Caco-2 (cell line): ENCODE measurements at regions of chr18 and their contacts with region 1.

Region 1: GRCh38 chr18:61502472-61502871 is 169.2 kb downstream of the CDH20 start:
- DNase-seq: peak; percentile 27 to 35
- H3K4me3 ChIP-seq: no peak overlapping the region
- H3K4me3 Mint-ChIP-seq: no peak overlapping the region
- H3K27ac Mint-ChIP-seq: no peak overlapping the region
- H3K4me1 ChIP-seq: no peaks in the 10 kb centered on the region
- H3K4me1 Mint-ChIP-seq: no peaks in the 10 kb centered on the region
- H3K27me3 ChIP-seq: no peaks in the 10 kb centered on the region
- H3K27me3 Mint-ChIP-seq: peaks cover 4% of the 10 kb centered on the region
- CTCF ChIP-seq: peak; percentile 41 to 58

Region 2: GRCh38 chr18:60684843-60685513 is 817.5 kb before region 1 on chr18:
- CTCF ChIA-PET with region 1: no interaction called
- POLR2A ChIA-PET with region 1: no interaction called
- intact Hi-C with region 1: loop called (anchors 10 kb)
- DNase-seq: no peak
- H3K4me3 ChIP-seq: no peak overlapping the region
- H3K4me3 Mint-ChIP-seq: no peak overlapping the region
- H3K27ac Mint-ChIP-seq: no peak overlapping the region
- H3K4me1 ChIP-seq: no peaks in the 10 kb centered on the region
- H3K4me1 Mint-ChIP-seq: no peaks in the 10 kb centered on the region
- H3K27me3 ChIP-seq: no peaks in the 10 kb centered on the region
- H3K27me3 Mint-ChIP-seq: no peaks in the 10 kb centered on the region
- CTCF ChIP-seq: no peak

Region 3: DNA sequence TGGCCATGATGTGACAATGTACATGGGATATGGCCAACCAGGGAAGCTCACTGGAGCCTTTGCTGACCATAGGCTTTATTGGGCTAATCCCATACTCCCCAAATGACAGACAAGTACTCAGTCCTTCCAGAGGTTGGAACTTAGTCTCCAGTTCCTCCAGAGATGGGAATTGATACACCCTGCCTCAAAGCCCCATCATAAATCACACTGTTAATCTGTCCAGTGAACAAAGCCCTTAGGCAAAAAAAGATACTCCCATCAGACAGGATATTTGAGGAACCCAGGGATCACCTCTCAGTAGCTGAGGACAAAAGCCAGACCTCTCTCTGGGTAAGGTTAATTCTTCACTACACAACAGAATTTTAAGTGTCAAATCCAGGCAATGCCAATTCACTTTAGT is 416.7 kb before region 1 on chr18:
- CTCF ChIA-PET with region 1: no interaction called
- POLR2A ChIA-PET with region 1: no interaction called
- intact Hi-C with region 1: loop called (anchors 5 kb)
- DNase-seq: no peak
- H3K4me3 ChIP-seq: no peak overlapping the region
- H3K4me3 Mint-ChIP-seq: no peak overlapping the region
- H3K27ac Mint-ChIP-seq: no peak overlapping the region
- H3K4me1 ChIP-seq: no peaks in the 10 kb centered on the region
- H3K4me1 Mint-ChIP-seq: no peaks in the 10 kb centered on the region
- H3K27me3 ChIP-seq: no peaks in the 10 kb centered on the region
- H3K27me3 Mint-ChIP-seq: no peaks in the 10 kb centered on the region
- CTCF ChIP-seq: no peak

Region 4: DNA sequence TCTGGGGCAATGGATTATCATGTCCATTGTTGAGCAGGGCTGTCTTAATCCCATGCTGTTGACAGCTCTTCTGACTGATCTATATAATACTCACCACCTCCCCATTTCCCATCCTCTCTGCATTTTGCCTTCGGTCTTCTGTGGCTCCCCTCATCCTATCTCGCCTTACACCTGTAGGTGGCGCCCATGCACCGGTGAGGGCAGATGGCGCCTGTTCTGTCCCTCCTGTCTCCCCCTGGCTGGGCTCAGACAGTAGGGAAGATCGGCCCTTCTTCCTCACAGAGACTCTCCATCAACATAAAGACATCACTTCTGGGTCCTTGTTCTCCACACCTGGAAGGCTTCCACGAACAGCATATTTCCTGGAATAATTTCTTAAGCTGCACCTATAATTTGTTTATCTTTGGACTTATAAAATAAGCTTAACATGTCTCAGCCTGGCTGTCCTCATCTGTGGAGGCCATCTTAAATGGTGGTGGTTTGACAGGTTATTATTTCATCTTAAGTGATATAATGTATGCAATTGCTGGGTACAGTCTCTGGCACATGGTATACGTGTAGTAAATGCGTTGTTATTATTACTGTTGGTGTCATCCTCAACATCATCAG is 180.1 kb before region 1 on chr18:
- CTCF ChIA-PET with region 1: interaction called, 7 read pairs
- POLR2A ChIA-PET with region 1: no interaction called
- intact Hi-C with region 1: loop called (anchors 1 kb)
- DNase-seq: peak; percentile 38 to 69
- H3K4me3 ChIP-seq: no peak overlapping the region
- H3K4me3 Mint-ChIP-seq: no peak overlapping the region
- H3K27ac Mint-ChIP-seq: no peak overlapping the region
- H3K4me1 ChIP-seq: no peaks in the 10 kb centered on the region
- H3K4me1 Mint-ChIP-seq: no peaks in the 10 kb centered on the region
- H3K27me3 ChIP-seq: no peaks in the 10 kb centered on the region
- H3K27me3 Mint-ChIP-seq: peaks cover 10% of the 10 kb centered on the region
- CTCF ChIP-seq: peak; percentile 51 to 71

Region 5: GRCh38 chr18:61551586-61551985 is 49.1 kb after region 1 on chr18:
- CTCF ChIA-PET with region 1: no interaction called
- POLR2A ChIA-PET with region 1: no interaction called
- intact Hi-C with region 1: no loop called
- DNase-seq: peak in 1 of 2 experiments; percentile 56
- H3K4me3 ChIP-seq: no peak overlapping the region
- H3K4me3 Mint-ChIP-seq: no peak overlapping the region
- H3K27ac Mint-ChIP-seq: no peak overlapping the region
- H3K4me1 ChIP-seq: no peaks in the 10 kb centered on the region
- H3K4me1 Mint-ChIP-seq: no peaks in the 10 kb centered on the region
- H3K27me3 ChIP-seq: no peaks in the 10 kb centered on the region
- H3K27me3 Mint-ChIP-seq: no peaks in the 10 kb centered on the region
- CTCF ChIP-seq: peak; percentile 65 to 67